K562 (cell line): ENCODE measurements at regions of chr7 and their contacts with region 1.

Region 1: GRCh38 chr7:30134611-30135545 is at the start of gene MTURN:
- DNase-seq: peak; percentile 91 to 99 (median 99)
- ATAC-seq: peak; percentile 94
- H3K4me3 ChIP-seq: peak within 1 kb of the TSS; percentile 76
- H3K27ac ChIP-seq: peak within 1 kb of the TSS; percentile 68; the same call in 2 of the 3 replicates
- H3K4me1 ChIP-seq: peaks cover 5 to 16% of the 10 kb centered on the region in 2 experiments; a peak in 4 of 5 replicates
- H3K27me3 ChIP-seq: no peaks in the 10 kb centered on the region
- CTCF ChIP-seq: no peak
- EP300 ChIP-seq: no peak
- POLR2A ChIP-seq: no peak
- RAD21 ChIP-seq: no peak
- polyA plus RNA-seq, gene MTURN: 0.94 to 1.0 TPM

Region 2: GRCh38 chr7:30026229-30027064 is 108.4 kb before region 1 on chr7 and contains the start of gene FKBP14:
- CTCF ChIA-PET with region 1: no interaction called
- POLR2A ChIA-PET with region 1: interaction called, 4 read pairs
- in situ Hi-C with region 1: no loop called
- intact Hi-C with region 1: loop called (anchors 5 kb)
- DNase-seq: peak; percentile 96 to 99 (median 96)
- ATAC-seq: peak; percentile 92
- H3K4me3 ChIP-seq: peak within 1 kb of the TSS; percentile 82
- H3K27ac ChIP-seq: peak within 1 kb of the TSS; percentile 95
- H3K4me1 ChIP-seq: peaks cover 10 to 17% of the 10 kb centered on the region in 2 experiments; a peak in 3 of 5 replicates
- H3K27me3 ChIP-seq: no peaks in the 10 kb centered on the region
- CTCF ChIP-seq: peak in 1 of 3 experiments; percentile 2; a peak in 1 of 6 replicates
- EP300 ChIP-seq: 0 out of 2 replicates have a peak, but pooled peaks have one; percentile 33
- POLR2A ChIP-seq: peak; percentile 89
- RAD21 ChIP-seq: no peak
- polyA plus RNA-seq, gene FKBP14: 10.3 to 12.4 TPM

Region 3: GRCh38 chr7:30116771-30117170 is 18.1 kb before region 1 on chr7:
- CTCF ChIA-PET with region 1: no interaction called
- POLR2A ChIA-PET with region 1: interaction called, 11 read pairs
- in situ Hi-C with region 1: no loop called
- intact Hi-C with region 1: no loop called
- DNase-seq: no peak
- ATAC-seq: no peak
- H3K4me3 ChIP-seq: no peak overlapping the region
- H3K27ac ChIP-seq: no peak overlapping the region
- H3K4me1 ChIP-seq: no peaks in the 10 kb centered on the region
- H3K27me3 ChIP-seq: no peaks in the 10 kb centered on the region
- CTCF ChIP-seq: no peak
- EP300 ChIP-seq: no peak
- POLR2A ChIP-seq: no peak
- RAD21 ChIP-seq: no peak

Region 4: DNA sequence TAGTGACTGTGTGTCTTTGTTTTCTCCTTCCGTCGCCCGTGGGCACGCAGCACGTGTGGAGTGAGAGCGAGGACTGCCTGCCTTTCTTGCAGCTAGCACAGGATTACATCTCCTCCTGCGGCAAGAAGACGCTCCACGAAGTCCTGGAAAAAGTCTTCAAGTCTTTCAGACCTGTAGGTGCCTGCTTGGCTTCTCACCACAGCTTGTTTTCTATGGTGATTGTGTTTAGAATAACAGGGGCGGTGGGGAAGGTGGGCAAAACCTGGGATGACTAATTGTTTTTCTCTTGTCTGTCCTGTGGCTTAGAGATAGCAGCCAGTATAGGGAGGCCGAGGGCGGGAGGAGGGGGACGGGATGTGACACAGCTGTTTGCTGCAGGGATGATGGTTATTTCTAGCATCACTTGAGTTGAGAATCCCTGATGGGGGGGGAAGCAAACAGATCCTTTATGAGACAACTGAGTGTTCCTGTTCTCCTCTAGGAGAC is 11.3 kb after region 1 on chr7:
- CTCF ChIA-PET with region 1: no interaction called
- POLR2A ChIA-PET with region 1: interaction called, 13 read pairs
- in situ Hi-C with region 1: no loop called
- intact Hi-C with region 1: no loop called
- DNase-seq: peak; percentile 84 to 95 (median 90)
- ATAC-seq: peak; percentile 89
- H3K4me3 ChIP-seq: no peak overlapping the region
- H3K27ac ChIP-seq: peak overlapping the region; percentile 78
- H3K4me1 ChIP-seq: peaks cover 12 to 64% of the 10 kb centered on the region in 2 experiments; a peak in 4 of 5 replicates
- H3K27me3 ChIP-seq: no peaks in the 10 kb centered on the region
- CTCF ChIP-seq: no peak
- EP300 ChIP-seq: peak; percentile 91
- POLR2A ChIP-seq: 0 out of 2 replicates have a peak, but pooled peaks have one; percentile 19
- RAD21 ChIP-seq: no peak